CD8-positive, alpha-beta T cell (primary cell): ENCODE measurements at regions of chr19 and their contacts with region 1.

Region 1: DNA sequence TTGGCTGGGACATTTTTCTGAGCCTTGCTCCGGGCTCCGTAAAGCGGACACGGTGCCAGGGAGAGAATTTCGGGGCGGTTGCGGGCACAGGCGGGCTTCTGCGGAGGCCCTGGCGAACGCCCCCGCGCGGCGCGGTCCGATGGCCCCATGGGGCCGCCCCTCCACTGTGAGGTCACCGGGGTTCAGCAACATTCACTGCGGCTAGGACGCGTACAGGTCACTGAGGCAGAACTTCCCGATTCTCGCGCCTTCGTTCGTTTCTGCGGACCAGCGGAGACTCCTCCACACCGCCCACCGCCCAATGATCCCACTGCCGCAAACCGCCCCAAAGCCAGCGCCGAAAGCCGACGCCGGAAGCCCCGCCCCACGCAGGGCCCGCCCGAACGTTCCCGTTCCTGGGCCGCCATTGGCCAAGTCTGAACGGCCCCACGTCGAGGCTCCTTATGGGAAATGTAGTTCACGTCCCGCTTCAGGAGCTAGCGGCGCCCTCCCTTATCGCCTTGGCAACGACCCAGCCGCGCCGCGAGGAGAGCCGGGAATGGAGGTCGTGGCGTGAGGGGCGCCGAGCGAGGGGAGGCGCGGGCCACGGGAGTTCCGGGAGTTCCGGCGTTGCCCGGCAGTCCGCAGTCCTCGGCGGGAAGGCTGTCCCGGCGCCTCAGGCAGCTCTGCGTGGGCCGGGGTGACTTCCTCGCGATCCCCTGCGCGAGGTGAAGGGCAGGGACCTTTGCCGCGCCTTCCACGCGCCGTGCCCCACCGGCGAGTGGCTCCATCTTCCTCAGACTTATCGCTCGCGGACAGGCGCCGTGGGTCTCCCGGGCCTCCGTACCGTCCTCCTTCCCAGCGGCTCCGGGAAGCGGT is at the start of gene ZNF584:
- DNase-seq: peak; percentile 80 to 96 (median 93)
- ATAC-seq: peak; percentile 97
- H3K4me3 ChIP-seq: peak within 1 kb of the TSS; percentile 75 to 79
- H3K4me3 Mint-ChIP-seq: peak within 1 kb of the TSS; percentile 97
- H3K27ac ChIP-seq: peak within 1 kb of the TSS; percentile 67 to 85
- H3K27ac Mint-ChIP-seq: peak within 1 kb of the TSS; percentile 96
- H3K4me1 ChIP-seq: peaks cover 22% of the 10 kb centered on the region
- H3K4me1 Mint-ChIP-seq: peaks cover 33% of the 10 kb centered on the region
- H3K27me3 ChIP-seq: no peaks in the 10 kb centered on the region
- H3K27me3 Mint-ChIP-seq: no peaks in the 10 kb centered on the region
- CTCF ChIP-seq: no peak
- total RNA-seq, gene ZNF584: 1.2 to 1.7 TPM

Region 2: DNA sequence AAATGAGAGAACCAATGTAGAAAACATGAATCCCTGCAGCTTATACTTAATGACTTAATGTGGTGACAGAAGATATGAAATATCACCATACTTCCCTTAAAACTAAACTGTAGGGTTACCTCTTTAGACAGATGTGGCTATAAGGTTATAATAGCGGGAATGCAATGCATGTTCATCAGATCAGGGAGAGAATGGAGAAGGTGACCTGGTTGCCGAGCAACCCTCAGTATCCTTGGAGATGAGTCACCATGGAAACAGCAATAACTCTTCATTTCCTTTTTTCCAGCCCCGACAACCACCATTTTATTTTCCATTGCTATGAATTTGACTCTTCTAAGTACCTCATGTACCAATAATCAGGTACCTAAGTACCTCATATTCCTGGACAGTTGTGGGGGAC is 1708.8 kb before region 1 on chr19:
- CTCF ChIA-PET with region 1: no interaction called
- POLR2A ChIA-PET with region 1: no interaction called
- intact Hi-C with region 1: no loop called
- DNase-seq: no peak
- ATAC-seq: no peak
- H3K4me3 ChIP-seq: no peak overlapping the region
- H3K4me3 Mint-ChIP-seq: no peak overlapping the region
- H3K27ac ChIP-seq: no peak overlapping the region
- H3K27ac Mint-ChIP-seq: no peak overlapping the region
- H3K4me1 ChIP-seq: no peaks in the 10 kb centered on the region
- H3K4me1 Mint-ChIP-seq: no peaks in the 10 kb centered on the region
- H3K27me3 ChIP-seq: no peaks in the 10 kb centered on the region
- H3K27me3 Mint-ChIP-seq: no peaks in the 10 kb centered on the region
- CTCF ChIP-seq: no peak

Region 3: DNA sequence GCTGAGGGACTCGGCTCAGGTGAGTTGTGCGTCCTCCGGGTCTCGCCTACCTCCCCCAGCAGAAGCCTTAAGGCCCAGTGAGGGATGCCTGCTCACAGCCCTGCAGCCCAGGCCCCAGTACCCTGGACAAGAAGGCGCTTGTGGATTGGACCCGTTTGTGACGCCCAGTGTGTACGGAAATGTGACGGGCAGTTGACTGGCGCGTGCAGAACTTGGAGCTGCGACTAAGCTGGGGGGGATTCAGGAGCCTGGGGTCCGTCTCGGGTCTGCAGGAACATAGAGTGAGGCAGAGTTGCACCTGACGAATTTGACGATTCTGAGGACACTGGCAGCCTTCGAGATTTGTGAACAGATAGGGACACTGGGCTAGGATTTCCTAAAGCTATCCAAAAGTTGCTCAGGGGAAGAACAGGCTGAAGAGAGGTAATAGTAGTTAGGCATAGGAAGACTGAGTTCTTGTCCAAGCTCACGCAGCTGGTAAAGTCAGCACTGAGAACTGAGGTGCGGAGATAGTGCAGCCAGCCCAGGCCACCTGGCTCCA is 726.1 kb before region 1 on chr19:
- CTCF ChIA-PET with region 1: no interaction called
- POLR2A ChIA-PET with region 1: no interaction called
- intact Hi-C with region 1: loop called in 1 of 2 experiments (anchors 10 kb)
- DNase-seq: no peak
- ATAC-seq: no peak
- H3K4me3 ChIP-seq: peak overlapping the region; percentile 91 to 94
- H3K4me3 Mint-ChIP-seq: peak overlapping the region; percentile 98
- H3K27ac ChIP-seq: peak overlapping the region; percentile 69 to 71
- H3K27ac Mint-ChIP-seq: peak overlapping the region; percentile 97
- H3K4me1 ChIP-seq: peaks cover 19% of the 10 kb centered on the region
- H3K4me1 Mint-ChIP-seq: peaks cover 36% of the 10 kb centered on the region
- H3K27me3 ChIP-seq: peaks cover 0 to 2% of the 10 kb centered on the region in 2 experiments
- H3K27me3 Mint-ChIP-seq: peaks cover 7% of the 10 kb centered on the region
- CTCF ChIP-seq: no peak

Region 4: DNA sequence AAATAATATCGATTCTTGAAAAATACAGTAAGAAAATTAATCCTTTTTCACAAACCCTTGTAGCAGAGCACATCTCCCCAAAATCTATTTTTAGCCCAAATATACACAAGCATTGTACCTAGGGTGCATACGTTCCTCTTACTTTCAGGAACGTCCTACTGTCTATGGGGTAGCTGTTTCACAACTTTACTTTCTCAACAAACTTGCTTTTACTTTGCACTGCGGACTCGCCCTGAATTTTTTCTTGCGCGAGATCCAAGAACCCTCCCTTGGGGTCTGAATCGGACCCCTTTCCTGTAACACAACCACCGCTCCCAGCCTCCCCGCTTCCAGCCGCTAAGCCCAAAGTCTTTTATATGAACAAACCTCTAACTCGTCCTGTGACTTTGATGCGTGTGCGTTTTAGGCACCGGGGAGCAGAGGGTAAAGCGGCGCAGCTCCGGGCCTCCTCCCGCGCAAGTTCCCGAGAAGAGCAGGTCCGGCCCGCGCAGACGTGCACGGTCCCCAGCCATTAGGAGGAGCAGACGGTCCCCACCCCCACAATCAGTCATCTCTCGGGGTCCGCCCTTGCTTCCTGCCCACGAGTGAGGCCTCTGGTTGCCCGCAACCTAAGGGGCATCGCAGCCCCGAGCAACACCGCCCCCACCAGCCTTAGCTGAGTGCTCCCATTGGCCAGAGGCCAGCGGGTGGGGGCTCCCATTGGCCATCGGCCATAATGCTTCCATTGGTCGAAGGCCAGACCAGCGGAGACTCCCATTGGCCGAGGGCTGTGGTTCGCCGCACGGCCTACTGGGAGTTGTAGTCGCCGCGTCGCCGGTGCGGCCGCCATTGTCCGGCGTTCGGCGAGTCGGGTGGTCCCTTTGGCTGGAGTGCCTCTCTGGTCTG is 130.0 kb before region 1 on chr19 and contains the start of gene ZNF8:
- CTCF ChIA-PET with region 1: no interaction called
- POLR2A ChIA-PET with region 1: no interaction called
- intact Hi-C with region 1: loop called in 1 of 2 experiments (anchors 2 kb)
- DNase-seq: peak; percentile 89 to 99 (median 97)
- ATAC-seq: peak; percentile 97
- H3K4me3 ChIP-seq: peak within 1 kb of the TSS; percentile 67 to 92
- H3K4me3 Mint-ChIP-seq: peak within 1 kb of the TSS; percentile 99
- H3K27ac ChIP-seq: peak within 1 kb of the TSS; percentile 72 to 85
- H3K27ac Mint-ChIP-seq: peak within 1 kb of the TSS; percentile 96
- H3K4me1 ChIP-seq: peaks cover 26% of the 10 kb centered on the region
- H3K4me1 Mint-ChIP-seq: peaks cover 50% of the 10 kb centered on the region
- H3K27me3 ChIP-seq: no peaks in the 10 kb centered on the region
- H3K27me3 Mint-ChIP-seq: no peaks in the 10 kb centered on the region
- CTCF ChIP-seq: no peak
- total RNA-seq, gene ZNF8: 9.2 to 9.5 TPM

Region 5: DNA sequence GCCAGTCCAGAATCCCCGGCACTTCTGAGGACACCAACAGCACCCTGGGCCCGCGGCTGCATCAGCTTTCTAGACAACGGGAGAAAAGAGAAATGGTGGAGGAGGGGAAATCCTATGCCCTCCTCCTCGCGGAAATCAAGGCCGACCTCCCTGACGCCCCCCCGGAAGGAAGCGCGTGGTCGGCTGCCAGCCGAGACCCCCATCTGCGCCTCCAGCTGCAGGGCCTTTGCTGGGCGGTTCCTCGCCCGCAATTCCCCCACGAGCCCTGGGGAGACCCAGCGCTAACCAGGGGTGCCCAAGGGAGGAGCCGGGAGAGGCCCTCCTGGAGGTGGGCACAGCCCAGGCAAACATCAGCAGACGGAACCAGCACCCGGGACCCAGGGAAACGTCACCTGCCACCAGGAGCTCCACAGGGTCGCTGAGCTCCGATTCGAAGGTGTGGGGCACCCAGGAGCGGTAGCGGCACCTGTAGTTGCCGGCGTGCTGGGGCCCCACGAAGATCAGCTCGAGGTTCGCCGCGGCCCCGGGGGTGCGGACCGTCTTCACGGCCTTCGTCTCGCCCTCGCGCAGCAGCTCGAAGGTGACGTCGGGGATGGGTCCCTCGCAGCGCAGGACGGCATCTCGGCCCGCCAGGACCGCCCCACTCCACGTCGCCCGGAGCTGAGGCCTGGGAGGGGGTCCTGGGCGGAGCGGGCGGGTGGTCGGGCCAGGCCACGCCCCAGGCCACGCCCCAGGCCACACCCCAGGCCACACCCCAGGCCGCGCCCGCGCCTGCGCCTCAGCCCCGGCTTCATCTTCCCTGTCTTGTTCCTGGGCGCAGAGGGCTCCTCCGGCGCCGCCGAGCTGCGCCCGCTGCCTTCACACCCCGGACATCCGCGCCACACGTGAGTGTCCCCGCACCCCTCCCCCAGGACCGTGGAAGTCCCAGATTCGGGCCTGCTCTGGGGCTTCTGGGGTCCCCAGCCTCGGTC is 61.1 kb before region 1 on chr19:
- CTCF ChIA-PET with region 1: no interaction called
- POLR2A ChIA-PET with region 1: no interaction called
- intact Hi-C with region 1: loop called (anchors 2 to 5 kb)
- DNase-seq: peak; percentile 41 to 86 (median 71)
- ATAC-seq: peak; percentile 90
- H3K4me3 ChIP-seq: peak overlapping the region; percentile 72 to 95
- H3K4me3 Mint-ChIP-seq: peak overlapping the region; percentile 91
- H3K27ac ChIP-seq: peak overlapping the region; percentile 63 to 85
- H3K27ac Mint-ChIP-seq: peak overlapping the region; percentile 93
- H3K4me1 ChIP-seq: peaks cover 17% of the 10 kb centered on the region
- H3K4me1 Mint-ChIP-seq: peaks cover 35% of the 10 kb centered on the region
- H3K27me3 ChIP-seq: no peaks in the 10 kb centered on the region
- H3K27me3 Mint-ChIP-seq: no peaks in the 10 kb centered on the region
- CTCF ChIP-seq: no peak

Region 6: GRCh38 chr19:58386576-58387337 is 21.6 kb before region 1 on chr19 and contains the start of gene RPS5:
- CTCF ChIA-PET with region 1: no interaction called
- POLR2A ChIA-PET with region 1: no interaction called
- intact Hi-C with region 1: loop called (anchors 1 kb)
- DNase-seq: peak; percentile 92 to 100 (median 95)
- ATAC-seq: peak; percentile 88
- H3K4me3 ChIP-seq: peak within 1 kb of the TSS; percentile 88 to 90
- H3K4me3 Mint-ChIP-seq: peak within 1 kb of the TSS; percentile 93
- H3K27ac ChIP-seq: peak within 1 kb of the TSS; percentile 94 to 98
- H3K27ac Mint-ChIP-seq: peak within 1 kb of the TSS; percentile 99
- H3K4me1 ChIP-seq: peaks cover 41% of the 10 kb centered on the region
- H3K4me1 Mint-ChIP-seq: peaks cover 52% of the 10 kb centered on the region
- H3K27me3 ChIP-seq: no peaks in the 10 kb centered on the region
- H3K27me3 Mint-ChIP-seq: no peaks in the 10 kb centered on the region
- CTCF ChIP-seq: no peak
- total RNA-seq, gene RPS5: 1,884 to 1,887 TPM

Region 7: DNA sequence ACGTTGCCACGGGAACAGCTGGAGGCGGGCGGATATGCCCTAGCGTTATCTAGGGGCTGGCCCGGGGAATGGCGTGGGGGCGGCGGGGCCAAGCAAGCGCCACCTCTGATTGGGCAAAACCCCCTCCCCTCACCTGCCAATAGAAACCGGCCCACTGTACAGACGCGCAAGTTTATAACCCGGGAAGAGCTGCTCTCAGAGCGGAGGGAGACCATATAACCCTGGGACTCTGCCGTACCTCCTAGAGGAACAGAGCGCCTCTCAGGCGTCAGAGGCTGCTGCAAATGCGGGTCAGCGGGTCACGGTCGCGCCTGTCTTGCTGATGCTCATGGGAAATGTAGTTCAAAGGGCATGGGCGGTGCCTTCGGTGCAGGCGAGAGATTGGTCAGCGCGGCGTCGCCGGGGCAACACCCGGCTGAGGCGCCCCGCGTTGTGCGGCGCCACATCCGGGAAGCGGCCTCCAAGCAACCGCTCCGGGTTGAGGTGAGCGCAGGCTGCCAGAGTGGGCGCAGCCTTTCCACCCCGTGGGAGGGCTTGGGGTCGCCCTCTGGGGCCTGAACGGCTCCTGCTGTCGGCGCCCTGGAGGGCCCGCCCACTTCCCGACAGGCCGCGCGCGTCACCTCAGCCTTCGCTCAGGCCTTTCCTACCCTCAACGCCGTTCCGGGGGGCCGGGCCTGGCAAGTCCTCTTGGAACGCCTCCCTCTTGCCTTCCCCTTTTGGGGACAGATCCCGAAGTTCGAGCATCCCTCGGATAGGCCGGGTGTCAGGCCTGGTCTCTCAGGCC is 67.5 kb after region 1 on chr19 and contains the start of gene ZNF446:
- CTCF ChIA-PET with region 1: no interaction called
- POLR2A ChIA-PET with region 1: no interaction called
- intact Hi-C with region 1: loop called (anchors 1 kb)
- DNase-seq: peak; percentile 92 to 99 (median 97)
- ATAC-seq: peak; percentile 82
- H3K4me3 ChIP-seq: peak within 1 kb of the TSS; percentile 56 to 72
- H3K4me3 Mint-ChIP-seq: peak within 1 kb of the TSS; percentile 92
- H3K27ac ChIP-seq: peak within 1 kb of the TSS; percentile 75 to 95
- H3K27ac Mint-ChIP-seq: peak within 1 kb of the TSS; percentile 97
- H3K4me1 ChIP-seq: peaks cover 17% of the 10 kb centered on the region
- H3K4me1 Mint-ChIP-seq: peaks cover 16% of the 10 kb centered on the region
- H3K27me3 ChIP-seq: no peaks in the 10 kb centered on the region
- H3K27me3 Mint-ChIP-seq: no peaks in the 10 kb centered on the region
- CTCF ChIP-seq: no peak
- total RNA-seq, gene ZNF446: 14.6 to 16.5 TPM